ENCODE measurements at regions of chr11 and their contacts with region 1.

Region 1: GRCh38 chr11:96869207-96869606 is 479.4 kb downstream of the JRKL start:
- DNase-seq: peak in 1 of 2 donors; percentile 19
- ATAC-seq: peak; percentile 37 to 88 (median 78)
- H3K4me3 ChIP-seq: no peak overlapping the region
- H3K27ac ChIP-seq: peak overlapping the region in 2 of 10 donors; percentile 32 to 46
- H3K4me1 ChIP-seq: peaks cover 0 to 11% (median 4%) of the 10 kb centered on the region in 9 donors
- H3K27me3 ChIP-seq: no peaks in the 10 kb centered on the region
- CTCF ChIP-seq: no peak

Region 2: DNA sequence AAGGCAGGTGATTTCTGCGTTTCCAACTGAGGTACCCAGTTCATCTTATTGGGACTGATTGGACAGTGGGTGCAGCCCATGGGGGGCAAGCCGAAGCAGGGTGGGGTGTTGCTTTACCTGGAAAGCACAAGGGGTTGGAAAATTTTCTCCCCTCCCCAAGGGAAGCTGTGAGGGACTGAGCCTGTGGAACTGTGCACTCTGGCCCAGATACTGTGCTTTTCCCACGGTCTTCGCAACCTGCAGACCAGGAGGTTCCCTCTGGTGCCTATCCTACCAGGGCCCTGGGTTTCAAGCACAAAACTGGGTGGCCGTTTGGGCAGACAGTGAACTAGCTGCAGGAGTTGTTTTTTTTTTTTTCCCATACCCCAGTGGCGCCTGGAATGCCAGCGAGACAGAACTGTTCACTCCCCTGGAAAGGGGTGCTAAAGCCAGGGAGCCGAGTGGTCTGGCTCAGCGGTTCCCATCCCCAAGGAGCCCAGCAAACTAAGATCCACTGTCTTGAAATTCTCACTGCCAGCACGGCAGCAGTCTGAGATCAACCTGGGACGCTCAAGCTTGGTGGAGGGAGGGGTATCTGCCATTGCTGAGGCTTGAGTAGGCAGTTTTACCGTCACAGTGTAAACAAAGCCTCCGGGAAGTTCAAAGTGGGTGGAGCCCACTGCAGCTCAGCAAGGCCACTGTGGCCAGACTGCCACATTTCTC is 382.2 kb before region 1 on chr11:
- intact Hi-C with region 1: loop called in 1 of 10 experiments (anchors 10 kb)
- DNase-seq: no peak
- ATAC-seq: no peak
- H3K4me3 ChIP-seq: no peak overlapping the region
- H3K27ac ChIP-seq: no peak overlapping the region
- H3K4me1 ChIP-seq: peaks cover 0 to 25% (median 13%) of the 10 kb centered on the region in 9 donors
- H3K27me3 ChIP-seq: no peaks in the 10 kb centered on the region
- CTCF ChIP-seq: no peak

Region 3: DNA sequence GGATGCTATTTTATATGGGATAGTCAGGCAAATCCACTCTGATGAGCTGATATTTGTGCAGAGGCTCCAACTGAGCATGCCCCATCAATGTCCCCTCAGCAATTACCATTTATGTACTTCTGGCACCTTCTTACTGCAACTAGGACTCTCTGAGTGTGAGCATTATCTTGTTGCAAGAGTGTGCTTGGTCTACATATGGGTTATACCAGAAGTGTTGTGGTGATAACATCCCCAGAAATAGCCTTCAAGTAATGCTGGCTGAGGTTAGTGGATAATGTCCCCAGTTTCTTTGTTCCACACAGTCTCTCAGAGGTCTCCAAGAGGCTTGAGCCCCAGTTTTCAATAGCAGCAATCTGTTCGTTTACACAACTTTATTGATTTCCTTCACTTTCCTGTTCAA is 70.8 kb before region 1 on chr11:
- intact Hi-C with region 1: no loop called
- DNase-seq: no peak
- ATAC-seq: peak in 7 of 8 donors; percentile 58 to 92 (median 83)
- H3K4me3 ChIP-seq: no peak overlapping the region
- H3K27ac ChIP-seq: no peak overlapping the region
- H3K4me1 ChIP-seq: no peaks in the 10 kb centered on the region
- H3K27me3 ChIP-seq: no peaks in the 10 kb centered on the region
- CTCF ChIP-seq: no peak

Region 4: DNA sequence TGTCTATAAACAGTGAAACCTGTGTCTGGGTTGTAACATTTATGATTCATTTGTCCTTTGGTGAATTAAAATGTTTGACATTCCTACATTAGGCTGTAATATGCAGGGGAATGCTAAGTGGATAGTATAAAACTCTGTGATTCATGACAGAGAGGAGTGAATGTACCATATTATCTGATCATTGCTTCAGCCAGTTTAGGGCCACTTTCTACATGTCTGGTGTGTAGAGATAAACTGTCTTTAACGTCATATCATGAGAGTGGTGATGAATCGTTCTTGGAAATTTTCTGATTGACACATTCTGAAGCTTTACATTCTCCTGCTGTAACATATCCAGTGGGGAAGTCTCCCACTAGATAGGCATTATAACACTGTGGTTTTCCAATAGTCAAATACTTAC is 51.7 kb before region 1 on chr11:
- intact Hi-C with region 1: no loop called
- DNase-seq: no peak
- ATAC-seq: no peak
- H3K4me3 ChIP-seq: no peak overlapping the region
- H3K27ac ChIP-seq: no peak overlapping the region
- H3K4me1 ChIP-seq: no peaks in the 10 kb centered on the region
- H3K27me3 ChIP-seq: no peaks in the 10 kb centered on the region
- CTCF ChIP-seq: no peak

Region 5: DNA sequence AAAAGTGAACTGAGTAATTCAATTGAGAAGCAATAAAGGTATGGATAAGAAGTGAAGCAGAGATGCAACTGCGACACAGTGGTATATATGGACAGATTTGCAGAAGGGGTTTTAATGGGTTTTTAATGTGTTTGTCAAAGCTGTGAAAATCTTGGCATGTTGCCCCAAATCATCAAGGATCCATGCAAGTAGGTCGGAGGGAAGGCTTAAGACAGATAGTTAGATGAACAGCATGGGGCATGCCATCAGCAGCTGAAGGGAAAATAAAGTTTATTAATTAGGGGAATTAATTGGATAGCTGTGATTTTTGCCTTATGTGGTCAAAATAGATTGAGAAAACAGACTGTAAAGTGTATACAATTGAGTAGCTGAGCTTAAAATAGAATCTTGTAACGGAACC is 360.7 kb after region 1 on chr11:
- intact Hi-C with region 1: loop called in 1 of 10 experiments (anchors 10 kb)
- DNase-seq: no peak
- ATAC-seq: no peak
- H3K4me3 ChIP-seq: no peak overlapping the region
- H3K27ac ChIP-seq: no peak overlapping the region
- H3K4me1 ChIP-seq: no peaks in the 10 kb centered on the region
- H3K27me3 ChIP-seq: no peaks in the 10 kb centered on the region
- CTCF ChIP-seq: no peak